ENCODE measurements at regions of chr14 and their contacts with region 1.

Region 1: GRCh38 chr14:103808403-103809001 is 38.9 kb downstream of the PPP1R13B start:
- DNase-seq: peak; percentile 41
- ATAC-seq: peak; percentile 97
- H3K4me3 ChIP-seq: no peak overlapping the region
- H3K27ac ChIP-seq: no peak overlapping the region
- H3K4me1 ChIP-seq: no peaks in the 10 kb centered on the region
- H3K27me3 ChIP-seq: no peaks in the 10 kb centered on the region
- CTCF ChIP-seq: peak; percentile 90

Region 2: DNA sequence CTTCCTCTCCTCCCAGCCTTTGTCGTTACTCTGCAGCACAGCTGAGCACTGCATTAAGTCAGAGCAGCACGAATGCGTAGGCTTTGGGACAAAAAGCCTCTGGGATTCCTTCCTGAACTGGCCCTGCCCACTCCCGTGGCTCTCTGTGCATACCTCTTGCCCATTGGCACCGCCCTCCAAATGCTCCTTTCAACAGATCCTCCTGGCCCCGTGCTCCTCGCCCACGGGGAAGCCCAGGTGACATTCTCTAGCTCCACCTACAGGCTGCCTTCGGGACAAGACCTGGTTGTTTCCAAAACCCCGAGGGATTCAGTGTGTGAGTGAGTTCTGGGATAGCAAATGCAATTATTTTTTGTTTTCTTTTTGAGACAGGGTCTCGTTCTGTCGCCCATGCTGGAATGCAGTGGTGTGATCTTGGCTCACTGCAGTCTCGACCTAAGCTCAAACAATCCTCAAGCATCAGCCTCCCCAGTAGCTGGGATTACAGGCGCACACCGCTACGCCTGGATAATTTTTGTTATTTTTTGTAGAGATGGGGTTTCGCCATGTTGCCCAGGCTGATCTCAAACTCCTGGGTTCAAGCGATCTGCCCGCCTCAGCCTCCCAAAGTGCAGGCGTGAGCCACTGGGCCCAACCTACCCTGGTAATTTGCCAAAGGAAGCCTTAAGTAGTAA is 101.9 kb after region 1 on chr14:
- CTCF ChIA-PET with region 1: interaction called, 12 read pairs
- POLR2A ChIA-PET with region 1: interaction called, 4 read pairs
- in situ Hi-C with region 1: no loop called
- intact Hi-C with region 1: loop called (anchors 5 kb)
- DNase-seq: no peak
- ATAC-seq: peak; percentile 95
- H3K4me3 ChIP-seq: no peak overlapping the region
- H3K27ac ChIP-seq: no peak overlapping the region
- H3K4me1 ChIP-seq: no peaks in the 10 kb centered on the region
- H3K27me3 ChIP-seq: no peaks in the 10 kb centered on the region
- CTCF ChIP-seq: peak; percentile 84

Measured in Panc1 (cell line).